Right ventricle myocardium superior (tissue), 1 donor: ENCODE measurements at regions of chr19 and their contacts with region 1.

Region 1: DNA sequence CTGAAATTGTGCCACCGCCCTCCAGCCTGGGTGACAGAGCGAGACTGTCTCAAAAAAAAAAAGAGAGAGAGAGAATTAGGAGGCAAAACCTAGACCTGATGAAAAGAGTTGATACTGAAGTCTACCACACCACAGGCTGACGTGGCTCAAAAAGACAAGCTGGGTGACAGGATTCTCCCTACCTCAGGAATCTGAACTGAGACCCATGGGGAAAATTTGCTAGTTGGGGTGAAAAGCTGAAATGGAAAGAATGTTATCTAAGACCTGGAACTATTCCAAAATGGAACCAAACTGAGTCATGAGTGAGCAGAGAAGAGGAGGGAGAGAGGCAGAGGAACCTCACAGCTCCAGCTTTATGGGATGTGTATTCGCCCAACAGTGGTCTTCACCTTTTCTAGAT is 11.7 kb downstream of the SMG9 start:
- DNase-seq: no peak
- ATAC-seq: no peak

Region 2: GRCh38 chr19:43765109-43765876 is 22.3 kb after region 1 on chr19:
- intact Hi-C with region 1: no loop called
- DNase-seq: peak; percentile 61
- ATAC-seq: peak; percentile 57

Region 3: DNA sequence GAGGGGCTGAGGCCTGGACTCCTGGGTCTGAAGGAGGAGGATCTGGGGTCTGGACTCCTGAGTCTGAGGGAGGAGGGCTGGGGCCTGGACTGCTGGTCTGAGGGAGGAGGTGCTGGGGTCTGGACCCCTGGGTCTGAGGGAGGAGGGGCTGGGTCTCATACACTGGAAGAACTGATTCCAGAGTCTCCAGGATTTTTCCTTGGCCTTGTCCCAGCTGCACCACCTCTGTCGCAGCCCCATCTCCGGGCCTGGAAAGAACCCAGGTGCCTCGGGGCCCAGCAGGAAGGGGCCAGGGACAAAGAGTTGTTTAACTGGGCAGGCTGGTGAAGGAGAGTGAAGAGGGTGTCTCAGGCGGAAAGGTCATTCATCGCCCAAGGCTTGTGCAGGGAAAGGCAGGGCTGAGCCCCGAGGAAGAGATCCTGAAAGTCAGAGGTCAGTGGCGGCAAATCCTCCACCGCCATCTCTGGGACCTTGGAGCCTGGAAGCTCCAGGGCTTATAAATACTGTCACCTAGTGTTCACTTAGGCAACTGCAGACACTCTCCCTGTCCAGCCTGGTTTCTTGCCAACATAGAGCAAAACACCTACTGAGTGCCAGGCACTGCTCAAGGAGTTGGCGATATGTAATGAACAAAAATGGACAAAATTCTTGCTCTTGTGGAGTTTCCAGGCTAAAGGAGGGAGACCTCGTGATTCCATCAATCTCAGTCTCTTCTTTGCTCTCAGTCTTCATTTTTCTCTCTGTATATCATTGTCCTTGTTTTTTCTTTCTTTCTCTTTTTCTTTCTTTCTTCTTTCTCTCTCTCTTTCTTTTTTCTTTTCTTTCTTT is 42.2 kb after region 1 on chr19:
- intact Hi-C with region 1: loop called (anchors 2 kb)
- DNase-seq: peak; percentile 60
- ATAC-seq: peak; percentile 85

Region 4: DNA sequence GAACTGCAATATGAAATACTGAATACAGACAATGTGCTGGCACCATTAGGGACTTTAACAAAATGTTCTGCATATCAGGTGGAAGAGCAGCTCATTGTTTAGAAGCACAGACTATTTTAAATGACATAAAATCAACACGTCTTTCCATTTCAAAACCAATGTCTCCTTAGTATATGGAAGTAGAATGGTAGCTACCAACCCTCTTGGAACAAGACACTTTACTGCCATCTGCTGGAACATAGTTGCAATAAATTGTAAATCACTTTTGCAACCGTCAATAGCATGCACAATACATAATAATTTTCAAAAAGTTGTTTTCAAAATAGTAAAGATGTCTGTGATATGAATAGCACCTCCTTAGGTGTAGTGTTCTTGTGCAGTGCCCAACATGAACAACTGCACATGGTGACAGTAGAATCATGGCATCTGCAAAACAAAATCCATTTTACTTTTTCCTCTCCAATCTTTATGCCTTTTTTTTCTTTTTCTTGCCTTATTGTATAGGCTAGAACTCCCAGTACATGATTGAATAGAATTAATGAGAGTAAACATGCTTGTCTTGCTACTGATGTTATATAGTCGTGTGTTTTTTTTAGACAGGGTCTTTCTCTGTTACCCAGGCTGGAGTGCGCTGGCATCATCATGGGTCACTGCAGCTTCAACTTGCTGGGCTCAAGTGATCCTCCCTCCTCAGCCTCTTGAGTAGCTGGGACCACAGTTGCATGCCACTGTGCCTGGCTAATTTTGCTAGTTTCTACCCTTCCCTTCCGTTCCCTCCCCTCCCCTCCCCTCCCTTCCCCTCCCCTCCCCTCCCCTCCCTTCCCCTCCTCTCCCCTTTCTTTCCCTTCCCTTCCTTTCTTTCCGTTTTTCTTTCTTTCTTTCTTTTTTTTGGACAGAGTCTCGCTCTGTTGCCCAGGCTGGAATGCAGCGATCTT is 67.0 kb after region 1 on chr19:
- intact Hi-C with region 1: loop called (anchors 10 kb)
- DNase-seq: no peak
- ATAC-seq: no peak